ENCODE measurements at regions of chr19 and their contacts with region 1.

Region 1: DNA sequence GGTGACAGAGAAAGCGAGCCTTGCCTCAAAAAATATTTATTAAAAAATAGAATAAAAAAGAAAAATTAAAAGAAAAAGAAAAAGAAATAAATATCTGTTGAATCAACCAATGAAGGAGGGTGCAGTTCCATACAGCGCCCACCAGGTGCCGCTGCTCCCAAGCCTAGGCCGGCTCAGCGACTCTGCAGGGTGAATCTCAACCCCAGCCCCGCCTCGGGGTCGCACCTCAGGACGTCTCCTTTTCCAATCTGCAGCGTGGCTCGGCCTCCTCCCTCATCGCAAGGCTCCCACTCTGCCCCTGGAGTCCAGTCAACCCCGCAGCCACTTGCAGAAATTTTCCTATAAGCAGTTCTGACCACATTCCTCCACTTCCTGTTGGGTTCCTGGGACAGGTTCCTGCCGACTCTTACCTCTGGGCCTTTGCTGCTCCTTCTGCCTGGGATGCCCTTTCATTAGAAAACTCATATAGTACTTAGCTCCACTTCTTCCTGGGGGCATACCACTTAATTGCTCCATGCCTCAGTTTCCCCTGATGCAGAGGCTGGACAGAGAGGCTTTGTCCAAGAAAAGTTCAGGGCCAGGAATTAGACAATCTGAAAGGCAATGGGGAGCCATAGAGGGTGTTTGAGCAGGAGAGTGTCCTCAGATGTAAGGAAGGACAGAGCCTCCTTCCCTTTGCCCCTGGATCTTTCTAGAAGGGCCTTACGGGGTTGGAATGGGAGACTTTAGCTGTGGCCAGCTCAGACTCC is 24.3 kb downstream of the NFILZ start:
- DNase-seq: peak; percentile 35
- H3K4me3 ChIP-seq: no peak overlapping the region
- H3K27ac ChIP-seq: no peak overlapping the region
- H3K4me1 ChIP-seq: no peaks in the 10 kb centered on the region
- H3K27me3 ChIP-seq: no peaks in the 10 kb centered on the region
- CTCF ChIP-seq: peak; percentile 87 to 89
- POLR2A ChIP-seq: no peak

Region 2: DNA sequence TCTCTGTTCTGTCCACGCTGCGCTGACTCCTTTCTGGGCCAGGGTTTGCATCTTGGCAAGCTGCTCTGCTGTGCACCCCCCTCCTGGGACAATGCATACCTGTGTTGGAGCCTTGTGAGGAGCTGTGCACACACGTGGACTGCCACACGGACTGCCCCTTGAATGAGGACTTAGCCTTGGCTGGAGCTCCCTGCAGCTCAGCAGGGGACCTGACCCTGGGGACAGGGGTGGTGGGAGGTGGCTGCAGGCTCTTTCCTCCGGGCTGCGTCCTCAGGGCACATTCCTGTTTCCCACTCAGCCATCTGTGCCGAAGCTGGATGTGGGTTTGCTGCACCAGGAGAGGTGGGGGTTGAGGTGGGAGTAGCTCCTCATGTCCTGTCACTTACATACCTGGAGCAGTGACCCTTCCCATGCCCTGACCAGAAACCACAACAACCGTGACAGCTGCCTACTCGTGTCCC is 256.4 kb before region 1 on chr19:
- CTCF ChIA-PET with region 1: no interaction called
- POLR2A ChIA-PET with region 1: no interaction called
- dilution Hi-C with region 1: no loop called
- intact Hi-C with region 1: no loop called
- DNase-seq: no peak
- H3K4me3 ChIP-seq: no peak overlapping the region
- H3K27ac ChIP-seq: no peak overlapping the region
- H3K4me1 ChIP-seq: peaks cover 20% of the 10 kb centered on the region
- H3K27me3 ChIP-seq: no peaks in the 10 kb centered on the region
- CTCF ChIP-seq: no peak
- POLR2A ChIP-seq: no peak

Region 3: DNA sequence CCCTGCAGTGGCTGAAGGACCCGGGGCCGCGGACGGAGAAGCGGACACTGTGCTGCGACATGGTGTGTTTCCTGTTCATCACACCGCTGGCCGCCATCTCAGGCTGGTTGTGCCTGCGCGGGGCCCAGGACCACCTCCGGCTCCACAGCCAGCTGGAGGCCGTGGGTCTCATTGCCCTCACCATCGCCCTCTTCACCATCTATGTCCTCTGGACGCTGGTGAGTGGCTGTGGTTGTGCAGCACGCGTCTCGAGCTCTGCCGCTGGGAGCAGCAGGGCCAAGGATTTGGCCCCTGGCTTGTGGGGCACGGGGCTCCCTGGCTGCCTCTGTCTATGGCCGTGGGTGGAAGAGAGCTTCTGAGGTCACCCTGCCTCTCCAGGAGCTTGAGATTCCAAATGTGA is 224.1 kb before region 1 on chr19:
- CTCF ChIA-PET with region 1: no interaction called
- POLR2A ChIA-PET with region 1: no interaction called
- dilution Hi-C with region 1: no loop called
- intact Hi-C with region 1: no loop called
- DNase-seq: no peak
- H3K4me3 ChIP-seq: no peak overlapping the region
- H3K27ac ChIP-seq: no peak overlapping the region
- H3K4me1 ChIP-seq: peaks cover 4% of the 10 kb centered on the region
- H3K27me3 ChIP-seq: no peaks in the 10 kb centered on the region
- CTCF ChIP-seq: no peak
- POLR2A ChIP-seq: no peak

Region 4: GRCh38 chr19:8641908-8642547 is 12.7 kb before region 1 on chr19:
- CTCF ChIA-PET with region 1: interaction called, 12 read pairs
- POLR2A ChIA-PET with region 1: no interaction called
- dilution Hi-C with region 1: no loop called
- intact Hi-C with region 1: no loop called
- DNase-seq: peak; percentile 44
- H3K4me3 ChIP-seq: no peak overlapping the region
- H3K27ac ChIP-seq: no peak overlapping the region
- H3K4me1 ChIP-seq: no peaks in the 10 kb centered on the region
- H3K27me3 ChIP-seq: no peaks in the 10 kb centered on the region
- CTCF ChIP-seq: peak; percentile 48 to 49
- POLR2A ChIP-seq: no peak

Region 5: GRCh38 chr19:8697671-8698432 is 43.1 kb after region 1 on chr19:
- CTCF ChIA-PET with region 1: interaction called, 7 read pairs
- POLR2A ChIA-PET with region 1: no interaction called
- dilution Hi-C with region 1: no loop called
- intact Hi-C with region 1: loop called (anchors 1 kb)
- DNase-seq: no peak
- H3K4me3 ChIP-seq: no peak overlapping the region
- H3K27ac ChIP-seq: no peak overlapping the region
- H3K4me1 ChIP-seq: no peaks in the 10 kb centered on the region
- H3K27me3 ChIP-seq: no peaks in the 10 kb centered on the region
- CTCF ChIP-seq: peak in 1 of 2 donors; percentile 15
- POLR2A ChIP-seq: no peak

Region 6: GRCh38 chr19:9075064-9075949 is 420.5 kb after region 1 on chr19:
- CTCF ChIA-PET with region 1: interaction called, 16 read pairs
- POLR2A ChIA-PET with region 1: no interaction called
- dilution Hi-C with region 1: no loop called
- intact Hi-C with region 1: loop called (anchors 1 kb)
- DNase-seq: peak; percentile 94
- H3K4me3 ChIP-seq: no peak overlapping the region
- H3K27ac ChIP-seq: peak overlapping the region; percentile 29
- H3K4me1 ChIP-seq: peaks cover 5% of the 10 kb centered on the region
- H3K27me3 ChIP-seq: no peaks in the 10 kb centered on the region
- CTCF ChIP-seq: no peak
- POLR2A ChIP-seq: no peak

Measured in endothelial cell of umbilical vein (primary cell).